AG04449 (cell line): ENCODE measurements at regions of chr16 and their contacts with region 1.

Region 1: GRCh38 chr16:81006814-81007696 is at the starts of genes CENPN and CMC2:
- DNase-seq: peak; percentile 96
- H3K4me3 ChIP-seq: peak within 1 kb of the TSS; percentile 98
- CTCF ChIP-seq: peak; percentile 4

Region 2: DNA sequence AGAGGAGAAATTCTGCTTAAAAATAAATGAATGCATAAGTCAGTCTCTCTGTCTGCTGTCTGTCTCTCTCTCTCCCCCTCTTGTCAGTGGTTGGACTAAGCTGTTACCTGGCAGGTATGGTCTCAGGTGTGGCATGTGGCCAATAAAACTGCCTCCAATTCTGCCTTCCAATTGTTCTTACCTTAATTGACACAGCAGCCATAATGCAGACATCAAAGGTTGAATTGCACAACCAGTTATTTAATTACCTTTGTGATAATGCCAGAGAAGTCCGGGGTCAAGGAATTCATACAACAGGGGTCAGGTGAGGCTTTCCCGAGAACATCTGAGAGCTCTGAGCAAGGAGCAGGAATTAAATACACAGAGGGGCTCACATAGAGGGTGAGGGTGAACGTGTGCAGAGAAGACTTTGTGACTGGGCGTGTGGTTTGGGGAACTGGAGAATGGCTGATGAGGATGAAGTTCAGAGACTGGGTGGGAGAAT is 123.9 kb before region 1 on chr16:
- CTCF ChIA-PET with region 1: no interaction called
- POLR2A ChIA-PET with region 1: no interaction called
- DNase-seq: no peak
- H3K4me3 ChIP-seq: no peak overlapping the region
- CTCF ChIP-seq: no peak

Region 3: DNA sequence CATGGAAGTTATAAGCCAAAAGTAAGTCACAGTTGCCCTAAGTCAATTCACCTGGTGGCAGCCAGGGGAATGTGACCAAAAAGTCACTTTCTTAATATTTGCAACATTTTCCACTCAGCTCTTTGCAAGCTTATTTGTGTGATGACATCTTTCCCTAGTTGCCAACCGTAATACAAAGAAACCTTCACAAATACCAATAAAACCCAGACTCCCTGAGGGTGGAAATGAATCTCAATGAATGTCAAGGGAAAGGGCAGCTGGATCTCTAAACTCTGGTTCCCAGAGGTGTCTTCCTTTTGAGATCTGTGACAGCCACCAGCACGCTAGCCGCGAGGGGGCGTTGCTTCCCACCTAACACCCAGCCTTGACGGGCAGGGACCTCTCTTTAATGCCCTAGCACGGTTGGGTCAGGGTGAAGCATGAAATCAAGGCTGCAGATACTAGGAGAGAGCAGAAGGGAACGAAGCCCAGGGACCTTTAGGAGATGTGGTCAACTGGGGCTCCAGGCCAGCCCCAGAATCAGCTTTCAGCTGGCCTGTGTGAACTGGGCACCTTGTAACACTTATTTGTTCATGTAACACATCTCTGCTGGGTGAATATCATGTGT is 82.6 kb before region 1 on chr16:
- CTCF ChIA-PET with region 1: interaction called, 28 read pairs
- POLR2A ChIA-PET with region 1: no interaction called
- DNase-seq: no peak
- H3K4me3 ChIP-seq: no peak overlapping the region
- CTCF ChIP-seq: peak; percentile 90

Region 4: GRCh38 chr16:80974649-80975376 is 32.2 kb before region 1 on chr16:
- CTCF ChIA-PET with region 1: interaction called, 11 read pairs
- POLR2A ChIA-PET with region 1: no interaction called
- DNase-seq: no peak
- H3K4me3 ChIP-seq: no peak overlapping the region
- CTCF ChIP-seq: peak; percentile 15

Region 5: GRCh38 chr16:80993307-80993706 is 13.7 kb before region 1 on chr16:
- CTCF ChIA-PET with region 1: interaction called, 125 read pairs
- POLR2A ChIA-PET with region 1: interaction called, 10 read pairs
- DNase-seq: peak; percentile 87
- H3K4me3 ChIP-seq: peak overlapping the region; percentile 43
- CTCF ChIP-seq: no peak

Region 6: DNA sequence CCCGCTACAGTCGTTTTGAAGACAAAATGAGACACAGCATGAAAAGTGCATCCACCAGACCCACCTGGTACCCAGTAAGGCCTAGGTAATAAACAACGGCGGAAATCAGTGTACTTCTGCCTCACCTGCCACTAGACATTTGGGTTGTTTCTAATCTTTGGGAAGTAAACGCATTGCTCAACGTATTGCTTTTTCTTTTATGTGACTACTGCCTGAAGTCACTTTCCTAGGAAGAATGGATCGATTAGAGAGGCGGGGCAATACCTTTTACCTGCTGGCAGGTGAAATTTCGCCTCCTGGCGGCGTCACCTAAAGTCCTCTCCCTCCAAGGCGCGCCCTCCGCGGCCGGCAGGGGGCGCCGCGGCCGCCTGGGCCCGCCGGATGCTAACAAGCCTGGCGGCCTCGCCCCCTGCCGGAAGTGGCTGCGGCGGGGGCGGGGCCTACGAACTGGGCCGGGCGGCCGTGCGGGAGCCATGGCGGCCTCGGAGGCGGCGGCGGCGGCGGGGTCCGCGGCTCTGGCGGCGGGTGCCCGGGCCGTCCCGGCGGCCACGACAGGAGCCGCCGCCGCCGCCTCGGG is 28.4 kb after region 1 on chr16 and contains the start of gene ATMIN:
- CTCF ChIA-PET with region 1: interaction called, 17 read pairs
- POLR2A ChIA-PET with region 1: no interaction called
- DNase-seq: no peak
- H3K4me3 ChIP-seq: peak within 1 kb of the TSS; percentile 74
- CTCF ChIP-seq: peak; percentile 81